ENCODE measurements at regions of chr11 and their contacts with region 1.

Region 1: DNA sequence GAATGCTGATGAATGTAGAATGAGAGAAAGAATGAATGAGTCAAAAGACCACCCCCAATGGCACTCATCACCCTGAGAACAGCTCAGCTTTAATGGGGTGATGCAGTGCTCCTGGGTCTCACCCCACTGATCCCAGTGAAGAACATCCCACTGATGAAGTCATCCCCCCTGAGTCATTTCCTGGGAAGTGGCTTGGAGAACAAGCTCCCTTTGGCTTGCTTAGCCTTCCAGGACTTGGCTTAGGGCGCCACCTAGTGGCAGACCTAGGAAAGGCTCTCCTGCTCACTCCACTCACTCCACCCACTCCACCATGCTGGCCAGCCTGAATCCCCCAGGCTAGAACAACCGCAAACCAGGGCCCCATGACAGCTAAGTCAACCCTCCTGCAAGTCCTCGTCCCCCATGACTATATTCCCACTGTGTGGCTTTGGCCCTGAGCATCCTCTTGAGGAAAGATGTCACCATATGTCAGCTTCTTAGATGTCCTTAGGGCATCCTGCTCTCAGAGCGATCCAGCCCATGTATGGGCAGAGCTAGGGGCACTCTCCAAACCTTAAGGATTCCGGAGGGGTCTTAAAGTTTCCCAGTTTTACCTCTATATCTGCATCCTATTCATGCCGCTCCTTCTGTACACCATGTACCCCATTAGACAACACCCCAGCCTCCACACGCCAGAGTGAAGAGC is 17.8 kb upstream of the TMPRSS13 start:
- DNase-seq: peak; percentile 83
- ATAC-seq: peak; percentile 32
- H3K4me3 ChIP-seq: no peak overlapping the region
- H3K4me3 Mint-ChIP-seq: no peak overlapping the region
- H3K27ac ChIP-seq: no peak overlapping the region
- H3K27ac Mint-ChIP-seq: peak overlapping the region; percentile 60
- H3K4me1 ChIP-seq: peaks cover 33 to 46% of the 10 kb centered on the region in 2 donors
- H3K4me1 Mint-ChIP-seq: peaks cover 38% of the 10 kb centered on the region
- H3K27me3 ChIP-seq: no peaks in the 10 kb centered on the region
- H3K27me3 Mint-ChIP-seq: peaks cover 9% of the 10 kb centered on the region
- CTCF ChIP-seq: peak; percentile 98

Region 2: GRCh38 chr11:117426269-117426685 is 520.7 kb before region 1 on chr11:
- CTCF ChIA-PET with region 1: interaction called, 28 read pairs
- POLR2A ChIA-PET with region 1: no interaction called
- intact Hi-C with region 1: no loop called
- DNase-seq: peak; percentile 65
- ATAC-seq: peak; percentile 49
- H3K4me3 ChIP-seq: no peak overlapping the region
- H3K4me3 Mint-ChIP-seq: no peak overlapping the region
- H3K27ac ChIP-seq: no peak overlapping the region
- H3K27ac Mint-ChIP-seq: peak overlapping the region; percentile 37
- H3K4me1 ChIP-seq: peaks cover 0 to 8% of the 10 kb centered on the region in 2 donors
- H3K4me1 Mint-ChIP-seq: peaks cover 8% of the 10 kb centered on the region
- H3K27me3 ChIP-seq: peaks cover 0 to 13% (median 0%) of the 10 kb centered on the region in 4 experiments
- H3K27me3 Mint-ChIP-seq: peaks cover 5% of the 10 kb centered on the region
- CTCF ChIP-seq: peak; percentile 97

Region 3: GRCh38 chr11:117828611-117829368 is 118.2 kb before region 1 on chr11:
- CTCF ChIA-PET with region 1: interaction called, 57 read pairs
- POLR2A ChIA-PET with region 1: no interaction called
- intact Hi-C with region 1: no loop called
- DNase-seq: peak; percentile 51
- ATAC-seq: peak; percentile 91
- H3K4me3 ChIP-seq: no peak overlapping the region
- H3K4me3 Mint-ChIP-seq: peak overlapping the region; percentile 57
- H3K27ac ChIP-seq: no peak overlapping the region
- H3K27ac Mint-ChIP-seq: peak overlapping the region; percentile 78
- H3K4me1 ChIP-seq: peaks cover 30 to 33% of the 10 kb centered on the region in 2 donors
- H3K4me1 Mint-ChIP-seq: peaks cover 38% of the 10 kb centered on the region
- H3K27me3 ChIP-seq: peaks cover 0 to 52% (median 9%) of the 10 kb centered on the region in 4 experiments
- H3K27me3 Mint-ChIP-seq: peaks cover 35% of the 10 kb centered on the region
- CTCF ChIP-seq: no peak

Region 4: DNA sequence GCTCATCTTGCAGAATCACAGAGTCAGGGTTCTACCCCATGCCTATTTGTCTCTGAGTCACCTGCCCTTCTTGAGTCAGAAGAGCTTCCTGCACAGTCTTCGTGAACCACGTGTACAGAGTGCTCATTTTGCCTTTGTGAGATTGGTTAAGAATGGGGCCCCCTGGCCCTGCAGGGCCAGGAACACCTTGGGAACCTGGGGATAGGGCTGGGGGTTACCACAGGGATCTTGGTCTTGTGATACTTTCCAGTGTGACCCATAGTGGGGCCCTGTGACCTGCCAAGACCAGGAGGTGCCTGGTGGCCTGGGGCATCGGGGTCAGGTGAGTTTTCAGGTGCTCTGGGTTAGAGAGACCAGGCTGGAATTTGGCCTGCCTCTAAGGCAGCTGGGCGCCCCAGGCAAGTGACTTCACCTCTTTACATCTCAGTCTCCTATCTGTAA is 27.2 kb before region 1 on chr11:
- CTCF ChIA-PET with region 1: interaction called, 18 read pairs
- POLR2A ChIA-PET with region 1: no interaction called
- intact Hi-C with region 1: no loop called
- DNase-seq: no peak
- ATAC-seq: peak; percentile 71
- H3K4me3 ChIP-seq: no peak overlapping the region
- H3K4me3 Mint-ChIP-seq: peak overlapping the region; percentile 10
- H3K27ac ChIP-seq: peak overlapping the region in 1 of 2 donors; percentile 33
- H3K27ac Mint-ChIP-seq: peak overlapping the region; percentile 48
- H3K4me1 ChIP-seq: peaks cover 13 to 14% of the 10 kb centered on the region in 2 donors
- H3K4me1 Mint-ChIP-seq: peaks cover 13% of the 10 kb centered on the region
- H3K27me3 ChIP-seq: no peaks in the 10 kb centered on the region
- H3K27me3 Mint-ChIP-seq: no peaks in the 10 kb centered on the region
- CTCF ChIP-seq: no peak

Region 5: GRCh38 chr11:117979481-117980211 is 32.7 kb after region 1 on chr11:
- CTCF ChIA-PET with region 1: interaction called, 110 read pairs
- POLR2A ChIA-PET with region 1: interaction called, 87 read pairs
- intact Hi-C with region 1: no loop called
- DNase-seq: peak; percentile 74
- ATAC-seq: peak; percentile 71
- H3K4me3 ChIP-seq: no peak overlapping the region
- H3K4me3 Mint-ChIP-seq: peak overlapping the region; percentile 59
- H3K27ac ChIP-seq: peak overlapping the region; percentile 69 to 79
- H3K27ac Mint-ChIP-seq: peak overlapping the region; percentile 79
- H3K4me1 ChIP-seq: peaks cover 33 to 49% of the 10 kb centered on the region in 2 donors
- H3K4me1 Mint-ChIP-seq: peaks cover 65% of the 10 kb centered on the region
- H3K27me3 ChIP-seq: no peaks in the 10 kb centered on the region
- H3K27me3 Mint-ChIP-seq: no peaks in the 10 kb centered on the region
- CTCF ChIP-seq: no peak

Region 6: DNA sequence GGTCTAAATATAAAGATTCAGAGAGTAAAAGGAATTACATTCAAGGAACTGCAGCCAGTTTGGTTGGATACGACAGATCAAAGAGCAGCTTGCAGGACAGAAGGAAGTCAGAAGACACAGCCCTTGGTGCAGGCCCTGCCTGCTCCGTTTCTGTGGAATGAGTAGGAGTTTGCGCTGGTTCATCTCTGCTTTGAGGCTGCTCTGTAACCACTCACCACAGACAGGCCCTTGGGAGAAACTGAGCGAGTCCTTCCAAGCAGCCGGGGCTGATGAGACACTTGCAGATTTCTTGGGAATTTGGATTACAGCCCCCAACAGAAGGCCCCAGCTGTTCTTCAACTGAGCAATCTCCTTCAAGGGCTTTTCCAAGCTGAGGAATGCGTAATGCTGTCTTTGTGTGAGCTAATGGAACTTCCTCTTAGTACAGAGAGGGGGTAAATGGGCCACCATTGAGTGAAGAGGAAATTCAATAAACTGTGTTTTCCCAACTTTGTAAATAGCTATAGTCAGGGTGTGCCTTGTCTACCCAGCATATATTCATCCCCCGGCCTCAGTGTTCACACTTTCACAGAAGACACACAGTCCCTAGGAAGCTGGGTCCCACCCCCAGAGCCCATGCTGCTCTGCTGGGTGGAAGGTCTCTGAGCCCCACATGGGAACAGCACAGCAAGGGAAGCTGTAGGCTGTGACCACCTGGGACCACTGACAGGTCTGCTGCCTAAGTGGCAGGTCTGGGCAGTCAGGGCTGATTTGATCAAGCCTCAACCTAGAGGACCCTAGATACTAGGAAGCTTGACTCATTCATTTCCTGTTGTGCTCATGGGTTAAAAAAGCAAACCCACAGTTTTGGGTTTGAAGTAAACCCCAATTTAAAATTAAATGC is 55.8 kb after region 1 on chr11:
- CTCF ChIA-PET with region 1: interaction called, 43 read pairs
- POLR2A ChIA-PET with region 1: interaction called, 23 read pairs
- intact Hi-C with region 1: no loop called
- DNase-seq: peak; percentile 52
- ATAC-seq: peak; percentile 14
- H3K4me3 ChIP-seq: no peak overlapping the region
- H3K4me3 Mint-ChIP-seq: peak overlapping the region; percentile 56
- H3K27ac ChIP-seq: peak overlapping the region; percentile 64 to 99
- H3K27ac Mint-ChIP-seq: peak overlapping the region; percentile 99
- H3K4me1 ChIP-seq: peaks cover 67 to 76% of the 10 kb centered on the region in 2 donors
- H3K4me1 Mint-ChIP-seq: peaks cover 84% of the 10 kb centered on the region
- H3K27me3 ChIP-seq: no peaks in the 10 kb centered on the region
- H3K27me3 Mint-ChIP-seq: no peaks in the 10 kb centered on the region
- CTCF ChIP-seq: no peak

Region 7: GRCh38 chr11:118161786-118162185 is 214.8 kb after region 1 on chr11:
- CTCF ChIA-PET with region 1: no interaction called
- POLR2A ChIA-PET with region 1: no interaction called
- intact Hi-C with region 1: no loop called
- DNase-seq: no peak
- ATAC-seq: no peak
- H3K4me3 ChIP-seq: no peak overlapping the region
- H3K4me3 Mint-ChIP-seq: no peak overlapping the region
- H3K27ac ChIP-seq: no peak overlapping the region
- H3K27ac Mint-ChIP-seq: no peak overlapping the region
- H3K4me1 ChIP-seq: no peaks in the 10 kb centered on the region
- H3K4me1 Mint-ChIP-seq: no peaks in the 10 kb centered on the region
- H3K27me3 ChIP-seq: peaks cover 0 to 31% (median 8%) of the 10 kb centered on the region in 4 experiments
- H3K27me3 Mint-ChIP-seq: peaks cover 47% of the 10 kb centered on the region
- CTCF ChIP-seq: no peak

Measured in B cell (primary cell).